ENCODE measurements at regions of chr12 and their contacts with region 1.

Region 1: GRCh38 chr12:60106214-60106613 is 510.4 kb downstream of the SLC16A7 start:
- DNase-seq: no peak
- H3K4me3 ChIP-seq: no peak overlapping the region
- H3K4me3 Mint-ChIP-seq: no peak overlapping the region
- H3K27ac Mint-ChIP-seq: no peak overlapping the region
- H3K4me1 ChIP-seq: peaks cover 10% of the 10 kb centered on the region
- H3K4me1 Mint-ChIP-seq: peaks cover 7% of the 10 kb centered on the region
- H3K27me3 ChIP-seq: no peaks in the 10 kb centered on the region
- H3K27me3 Mint-ChIP-seq: no peaks in the 10 kb centered on the region
- CTCF ChIP-seq: no peak

Region 2: GRCh38 chr12:59858508-59859170 is 247.6 kb before region 1 on chr12:
- CTCF ChIA-PET with region 1: no interaction called
- POLR2A ChIA-PET with region 1: no interaction called
- intact Hi-C with region 1: loop called (anchors 5 kb)
- DNase-seq: peak; percentile 72 to 86
- H3K4me3 ChIP-seq: no peak overlapping the region
- H3K4me3 Mint-ChIP-seq: peak overlapping the region; percentile 13
- H3K27ac Mint-ChIP-seq: no peak overlapping the region
- H3K4me1 ChIP-seq: peaks cover 33% of the 10 kb centered on the region
- H3K4me1 Mint-ChIP-seq: peaks cover 27% of the 10 kb centered on the region
- H3K27me3 ChIP-seq: no peaks in the 10 kb centered on the region
- H3K27me3 Mint-ChIP-seq: no peaks in the 10 kb centered on the region
- CTCF ChIP-seq: no peak

Region 3: DNA sequence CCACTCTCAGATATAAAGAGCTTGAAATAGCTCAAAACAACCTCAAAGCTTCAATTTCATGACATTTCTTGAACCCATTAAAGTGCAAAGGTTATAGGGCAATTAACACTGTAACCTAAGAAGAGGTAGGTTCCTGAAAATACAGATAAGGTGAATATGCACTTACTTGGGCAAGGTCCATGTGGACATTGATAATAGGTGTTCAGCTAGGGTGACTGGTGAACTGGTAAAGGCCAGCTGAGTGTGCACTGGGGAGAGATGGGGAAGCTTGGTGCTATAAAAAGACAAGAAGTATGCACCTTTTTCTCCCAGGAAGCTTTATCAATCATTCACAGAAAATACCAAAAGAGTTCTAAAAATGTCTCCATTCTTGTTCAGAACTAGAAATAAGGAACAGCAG is 91.8 kb before region 1 on chr12:
- CTCF ChIA-PET with region 1: no interaction called
- POLR2A ChIA-PET with region 1: no interaction called
- intact Hi-C with region 1: loop called (anchors 5 kb)
- DNase-seq: peak; percentile 42 to 83
- H3K4me3 ChIP-seq: no peak overlapping the region
- H3K4me3 Mint-ChIP-seq: peak overlapping the region; percentile 53
- H3K27ac Mint-ChIP-seq: no peak overlapping the region
- H3K4me1 ChIP-seq: peaks cover 14% of the 10 kb centered on the region
- H3K4me1 Mint-ChIP-seq: peaks cover 22% of the 10 kb centered on the region
- H3K27me3 ChIP-seq: no peaks in the 10 kb centered on the region
- H3K27me3 Mint-ChIP-seq: no peaks in the 10 kb centered on the region
- CTCF ChIP-seq: no peak

Region 4: GRCh38 chr12:60281522-60281921 is 175.3 kb after region 1 on chr12:
- CTCF ChIA-PET with region 1: no interaction called
- POLR2A ChIA-PET with region 1: no interaction called
- intact Hi-C with region 1: no loop called
- DNase-seq: no peak
- H3K4me3 ChIP-seq: no peak overlapping the region
- H3K4me3 Mint-ChIP-seq: no peak overlapping the region
- H3K27ac Mint-ChIP-seq: no peak overlapping the region
- H3K4me1 ChIP-seq: no peaks in the 10 kb centered on the region
- H3K4me1 Mint-ChIP-seq: no peaks in the 10 kb centered on the region
- H3K27me3 ChIP-seq: no peaks in the 10 kb centered on the region
- H3K27me3 Mint-ChIP-seq: no peaks in the 10 kb centered on the region
- CTCF ChIP-seq: no peak

Region 5: GRCh38 chr12:60494244-60494643 is 388.0 kb after region 1 on chr12:
- CTCF ChIA-PET with region 1: interaction called, 4 read pairs
- POLR2A ChIA-PET with region 1: no interaction called
- intact Hi-C with region 1: loop called (anchors 1 kb)
- DNase-seq: peak in 1 of 2 experiments; percentile 33
- H3K4me3 ChIP-seq: no peak overlapping the region
- H3K4me3 Mint-ChIP-seq: no peak overlapping the region
- H3K27ac Mint-ChIP-seq: no peak overlapping the region
- H3K4me1 ChIP-seq: no peaks in the 10 kb centered on the region
- H3K4me1 Mint-ChIP-seq: no peaks in the 10 kb centered on the region
- H3K27me3 ChIP-seq: no peaks in the 10 kb centered on the region
- H3K27me3 Mint-ChIP-seq: no peaks in the 10 kb centered on the region
- CTCF ChIP-seq: peak; percentile 41 to 65

Measured in Caco-2 (cell line).